Mammary epithelial cell (primary cell): ENCODE measurements at regions of chr9 and their contacts with region 1.

Region 1: DNA sequence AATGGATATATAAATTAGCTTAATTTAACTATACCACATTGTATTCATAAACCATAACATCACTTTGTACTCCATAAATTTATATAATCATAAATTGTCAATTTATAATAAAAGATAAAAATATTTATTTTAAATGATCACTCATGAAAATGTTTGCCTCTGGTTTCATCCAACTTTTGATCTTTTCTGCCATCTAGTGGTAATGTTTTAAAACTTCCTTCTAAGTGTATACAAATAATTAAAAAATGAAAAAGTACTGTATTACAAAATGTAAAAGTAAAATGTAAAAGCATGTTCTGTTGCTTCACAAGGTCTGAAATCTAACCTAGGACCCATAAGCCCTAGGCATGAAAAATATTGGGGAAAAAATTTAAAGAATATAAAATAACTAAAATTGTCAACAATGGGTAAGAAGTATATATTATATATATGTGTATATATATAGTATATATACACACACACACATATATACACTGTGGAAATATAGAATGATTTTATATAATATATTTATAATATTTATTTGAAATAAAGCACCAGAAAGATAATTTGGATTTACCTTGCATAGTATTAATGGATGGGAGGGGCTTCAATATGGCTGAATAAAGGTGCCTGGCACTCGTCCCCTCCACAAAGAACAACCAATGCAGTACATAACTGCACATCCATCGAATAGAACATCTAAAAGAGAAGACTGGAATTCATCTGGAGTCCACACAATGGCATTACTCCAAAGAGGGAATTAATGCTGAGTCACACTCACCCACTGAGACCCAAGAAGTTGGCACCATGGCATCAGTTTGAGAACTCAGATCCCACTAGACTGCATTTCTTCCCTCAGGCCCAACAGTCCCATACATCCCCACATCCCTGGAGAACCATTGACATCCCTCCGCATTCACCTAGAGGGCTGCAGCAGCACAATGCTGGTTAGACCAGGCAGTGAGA is 32.5 kb downstream of the ANXA1 start:
- DNase-seq: no peak
- H3K4me3 ChIP-seq: no peak overlapping the region
- H3K27ac ChIP-seq: no peak overlapping the region
- H3K4me1 ChIP-seq: peaks cover 5% of the 10 kb centered on the region
- H3K27me3 ChIP-seq: peaks cover 3% of the 10 kb centered on the region
- CTCF ChIP-seq: peak; percentile 27 to 42

Region 2: DNA sequence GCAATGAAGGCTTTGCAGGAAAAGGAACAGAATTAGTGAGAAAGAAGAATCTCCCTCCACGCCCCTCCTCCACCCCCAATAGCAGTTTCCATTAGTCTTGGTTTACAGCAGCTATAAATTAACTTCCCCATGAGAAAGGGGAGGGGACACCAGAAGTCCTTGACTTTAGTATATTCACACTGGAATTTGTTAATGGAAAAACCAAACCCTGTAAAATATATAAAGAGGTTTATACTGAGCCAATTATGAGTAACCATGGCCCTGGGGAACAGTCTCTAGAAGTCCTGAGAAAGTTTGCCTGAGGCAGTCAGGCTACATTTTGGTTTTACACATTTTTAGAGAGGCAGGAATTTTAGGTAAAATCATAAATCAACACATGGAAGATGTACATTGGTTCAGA is 319.9 kb before region 1 on chr9:
- CTCF ChIA-PET with region 1: no interaction called
- dilution Hi-C with region 1: loop called (anchors 5 kb)
- in situ Hi-C with region 1: loop called (anchors 10 kb)
- intact Hi-C with region 1: no loop called
- DNase-seq: no peak
- H3K4me3 ChIP-seq: no peak overlapping the region
- H3K27ac ChIP-seq: no peak overlapping the region
- H3K4me1 ChIP-seq: no peaks in the 10 kb centered on the region
- H3K27me3 ChIP-seq: no peaks in the 10 kb centered on the region
- CTCF ChIP-seq: no peak

Region 3: DNA sequence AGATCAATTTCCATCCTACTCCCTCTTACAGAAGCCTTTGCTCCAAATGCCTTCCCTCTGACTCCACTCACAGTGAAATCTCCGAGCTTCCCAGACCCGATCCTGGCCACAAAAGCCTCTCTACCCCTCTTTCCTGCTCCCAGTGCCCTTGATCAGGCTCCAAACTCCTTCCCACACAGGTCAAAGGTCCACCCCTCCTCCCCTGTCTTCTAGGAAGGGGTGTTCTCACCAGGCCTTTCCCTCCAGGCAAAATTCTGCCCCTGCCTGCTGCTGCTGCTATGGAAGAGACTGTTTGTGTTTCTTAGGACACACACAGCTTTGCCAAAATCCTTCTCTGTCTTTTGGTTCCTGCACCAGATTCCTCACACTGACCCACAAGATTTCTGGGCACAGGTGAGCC is 145.6 kb before region 1 on chr9:
- CTCF ChIA-PET with region 1: no interaction called
- dilution Hi-C with region 1: no loop called
- in situ Hi-C with region 1: no loop called
- intact Hi-C with region 1: loop called (anchors 5 kb)
- DNase-seq: peak; percentile 1
- H3K4me3 ChIP-seq: no peak overlapping the region
- H3K27ac ChIP-seq: no peak overlapping the region
- H3K4me1 ChIP-seq: no peaks in the 10 kb centered on the region
- H3K27me3 ChIP-seq: peaks cover 4% of the 10 kb centered on the region
- CTCF ChIP-seq: no peak

Region 4: GRCh38 chr9:73104342-73104741 is 79.8 kb before region 1 on chr9:
- CTCF ChIA-PET with region 1: no interaction called
- dilution Hi-C with region 1: no loop called
- in situ Hi-C with region 1: loop called in 1 of 2 experiments (anchors 5 kb)
- intact Hi-C with region 1: loop called (anchors 1 kb)
- DNase-seq: no peak
- H3K4me3 ChIP-seq: no peak overlapping the region
- H3K27ac ChIP-seq: no peak overlapping the region
- H3K4me1 ChIP-seq: peaks cover 5% of the 10 kb centered on the region
- H3K27me3 ChIP-seq: no peaks in the 10 kb centered on the region
- CTCF ChIP-seq: no peak

Region 5: GRCh38 chr9:73141267-73141666 is 42.9 kb before region 1 on chr9:
- CTCF ChIA-PET with region 1: no interaction called
- dilution Hi-C with region 1: no loop called
- in situ Hi-C with region 1: no loop called
- intact Hi-C with region 1: no loop called
- DNase-seq: no peak
- H3K4me3 ChIP-seq: no peak overlapping the region
- H3K27ac ChIP-seq: no peak overlapping the region
- H3K4me1 ChIP-seq: peaks cover 27% of the 10 kb centered on the region
- H3K27me3 ChIP-seq: no peaks in the 10 kb centered on the region
- CTCF ChIP-seq: no peak